ENCODE measurements at regions of chr13 and their contacts with region 1.

Region 1: GRCh38 chr13:80342471-80343380 is 1.8 kb upstream of the SPRY2 start:
- DNase-seq: peak; percentile 95
- ATAC-seq: peak; percentile 44

Region 2: DNA sequence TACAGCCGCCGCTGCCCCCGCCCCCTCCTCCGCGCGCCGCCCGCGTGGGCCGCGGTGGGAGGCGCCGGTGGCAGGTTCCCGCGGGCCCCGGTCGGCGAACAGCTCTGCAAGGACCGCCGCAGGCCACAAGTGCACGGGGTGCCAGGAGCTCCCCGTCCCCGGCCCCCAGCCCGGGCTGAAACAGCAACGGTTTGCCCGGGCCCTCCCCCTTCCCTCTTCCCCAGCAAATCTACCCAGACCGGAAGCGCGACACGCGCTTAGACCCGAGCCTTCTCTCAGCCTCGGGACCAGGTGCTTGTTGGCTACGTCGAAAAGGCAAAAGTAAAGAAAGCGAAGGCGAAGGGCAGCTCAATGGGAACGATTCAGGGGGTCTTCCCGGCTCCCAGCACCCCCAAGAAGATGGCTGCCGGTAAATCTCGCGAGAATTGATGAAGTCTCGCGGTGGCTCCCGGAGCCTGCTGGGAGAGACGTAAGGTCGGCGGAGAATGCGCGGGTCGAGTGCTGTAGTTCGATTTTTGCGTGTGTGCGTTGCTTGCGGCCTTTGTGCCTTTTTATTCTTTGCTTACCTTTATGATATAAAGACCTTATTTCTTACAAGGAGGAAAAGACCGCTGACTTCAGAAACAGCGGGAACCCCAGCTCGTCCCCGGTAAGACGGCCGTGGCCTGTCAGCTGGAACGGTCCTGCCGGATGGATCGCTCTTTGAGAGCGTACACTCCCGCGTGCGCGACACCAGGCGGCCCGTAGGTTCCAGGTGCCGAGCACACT is 936.7 kb before region 1 on chr13 and contains the start of gene RBM26:
- intact Hi-C with region 1: loop called (anchors 10 kb)
- DNase-seq: peak; percentile 96
- ATAC-seq: peak; percentile 95
- total RNA-seq, gene RBM26: 19.2 TPM

Region 3: GRCh38 chr13:79775830-79776229 is 566.9 kb before region 1 on chr13:
- intact Hi-C with region 1: loop called (anchors 2 kb)
- DNase-seq: no peak
- ATAC-seq: no peak

Region 4: DNA sequence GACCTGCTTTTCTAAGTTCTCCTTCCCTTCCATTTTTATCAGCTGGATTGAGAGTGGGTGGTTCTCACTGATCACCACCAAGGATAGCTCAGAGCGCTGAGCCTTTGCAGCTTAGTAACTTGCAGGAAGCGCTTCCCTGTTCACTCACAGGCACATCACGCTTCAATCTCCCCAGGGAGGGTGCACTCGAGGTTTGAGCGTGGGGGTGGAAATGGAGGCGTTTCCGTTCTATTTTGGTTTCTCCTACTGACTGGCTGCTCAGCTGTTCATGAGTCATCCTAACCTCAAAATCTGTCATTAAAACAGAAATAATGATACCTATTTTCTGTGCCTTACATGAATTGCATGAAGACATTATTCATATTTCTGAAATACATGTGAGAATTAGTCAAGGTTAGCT is 293.9 kb before region 1 on chr13:
- intact Hi-C with region 1: loop called (anchors 5 kb)
- DNase-seq: peak; percentile 84
- ATAC-seq: peak; percentile 97

Region 5: DNA sequence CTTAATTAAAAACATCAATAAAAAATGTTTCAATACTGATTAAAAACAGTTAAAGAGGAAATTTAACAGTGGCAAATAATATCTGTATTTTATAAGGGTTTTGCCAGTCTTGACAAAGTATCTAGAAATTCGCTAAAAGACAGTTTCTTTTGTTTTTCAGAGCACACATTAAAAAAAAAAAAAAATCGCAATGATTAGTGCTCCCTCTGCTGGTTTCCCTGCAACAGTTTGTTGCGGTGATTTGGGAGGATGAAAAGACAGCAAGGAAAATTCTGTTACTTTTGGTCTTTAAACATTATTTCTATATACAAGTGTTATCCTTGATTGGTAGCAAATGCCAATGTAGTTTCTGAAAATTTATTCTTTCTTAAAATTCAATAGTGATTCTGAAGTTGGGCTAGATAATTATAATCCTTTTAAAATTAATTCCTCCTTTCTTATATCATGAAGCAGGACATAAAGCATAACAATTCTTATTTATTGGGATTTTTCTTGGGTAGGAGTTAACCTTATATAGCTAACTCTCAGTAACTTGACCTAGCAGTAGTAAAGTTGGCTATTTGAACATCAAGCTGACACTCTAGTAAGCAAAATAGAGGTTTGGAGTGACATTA is 21.3 kb after region 1 on chr13:
- intact Hi-C with region 1: loop called (anchors 2 kb)
- DNase-seq: no peak
- ATAC-seq: no peak

Region 6: GRCh38 chr13:81017513-81018152 is 674.9 kb after region 1 on chr13:
- intact Hi-C with region 1: loop called (anchors 10 kb)
- DNase-seq: no peak
- ATAC-seq: no peak